ENCODE measurements at regions of chr11 and their contacts with region 1.

Region 1: GRCh38 chr11:11841723-11842420 is at the start of gene USP47:
- DNase-seq: peak; percentile 94
- H3K4me3 Mint-ChIP-seq: no peak within 1 kb of the TSS
- H3K27ac Mint-ChIP-seq: no peak within 1 kb of the TSS
- H3K4me1 Mint-ChIP-seq: peaks cover 2% of the 10 kb centered on the region
- H3K27me3 Mint-ChIP-seq: peaks cover 5% of the 10 kb centered on the region
- total RNA-seq, gene USP47: 52.4 to 56.0 TPM

Region 2: DNA sequence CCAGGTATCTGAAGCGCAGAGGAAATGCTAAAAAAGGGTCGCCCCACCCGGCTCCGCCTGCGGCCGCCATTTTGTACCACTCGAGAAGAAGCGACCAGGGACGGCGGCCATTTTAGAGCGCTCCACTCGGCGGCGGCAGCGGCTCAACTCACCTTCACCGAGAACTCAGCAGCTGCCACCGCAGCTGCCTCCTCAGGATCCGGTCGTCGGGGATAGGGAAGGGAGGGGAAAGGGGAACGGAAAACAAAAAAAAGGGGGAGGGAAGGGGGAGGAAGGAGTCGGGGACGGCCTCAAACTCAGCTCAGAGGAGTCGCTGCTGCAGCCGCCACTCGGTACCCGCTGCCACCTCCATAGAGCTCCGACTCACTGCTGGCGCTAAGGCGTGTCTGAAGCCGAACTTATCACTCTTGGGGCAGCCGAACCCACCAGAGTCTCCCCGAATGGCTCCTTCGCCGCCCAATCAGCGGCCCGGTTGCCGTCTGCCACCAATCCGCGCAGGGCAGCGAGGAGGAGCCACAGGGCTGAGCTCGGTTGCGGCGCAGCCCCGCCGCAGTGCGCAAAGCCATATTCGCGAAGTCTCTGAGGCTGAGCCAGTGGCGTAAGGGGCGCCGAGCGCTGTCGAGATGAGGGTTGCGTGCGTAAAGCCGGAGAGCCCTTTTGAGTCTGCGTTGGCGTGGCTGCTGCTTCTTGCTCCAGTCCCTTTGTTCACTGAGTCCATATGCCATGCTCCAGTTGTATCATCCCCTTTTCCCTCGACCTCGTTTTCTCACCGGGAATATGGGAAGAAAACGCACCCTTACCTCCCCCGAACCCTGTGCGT is 1033.1 kb before region 1 on chr11 and contains the start of gene EIF4G2:
- CTCF ChIA-PET with region 1: no interaction called
- intact Hi-C with region 1: loop called (anchors 1 kb)
- DNase-seq: peak; percentile 98
- H3K4me3 Mint-ChIP-seq: peak within 1 kb of the TSS; percentile 95
- H3K27ac Mint-ChIP-seq: peak within 1 kb of the TSS; percentile 97
- H3K4me1 Mint-ChIP-seq: peaks cover 43% of the 10 kb centered on the region
- H3K27me3 Mint-ChIP-seq: no peaks in the 10 kb centered on the region
- total RNA-seq, gene EIF4G2: 640 to 734 TPM

Region 3: GRCh38 chr11:11621573-11622319 is 220.1 kb before region 1 on chr11 and contains the start of gene GALNT18:
- CTCF ChIA-PET with region 1: no interaction called
- intact Hi-C with region 1: loop called (anchors 5 kb)
- DNase-seq: peak; percentile 88
- H3K4me3 Mint-ChIP-seq: peak within 1 kb of the TSS; percentile 74
- H3K27ac Mint-ChIP-seq: no peak within 1 kb of the TSS
- H3K4me1 Mint-ChIP-seq: no peaks in the 10 kb centered on the region
- H3K27me3 Mint-ChIP-seq: peaks cover 48% of the 10 kb centered on the region
- total RNA-seq, gene GALNT18: 4.3 to 4.7 TPM

Region 4: DNA sequence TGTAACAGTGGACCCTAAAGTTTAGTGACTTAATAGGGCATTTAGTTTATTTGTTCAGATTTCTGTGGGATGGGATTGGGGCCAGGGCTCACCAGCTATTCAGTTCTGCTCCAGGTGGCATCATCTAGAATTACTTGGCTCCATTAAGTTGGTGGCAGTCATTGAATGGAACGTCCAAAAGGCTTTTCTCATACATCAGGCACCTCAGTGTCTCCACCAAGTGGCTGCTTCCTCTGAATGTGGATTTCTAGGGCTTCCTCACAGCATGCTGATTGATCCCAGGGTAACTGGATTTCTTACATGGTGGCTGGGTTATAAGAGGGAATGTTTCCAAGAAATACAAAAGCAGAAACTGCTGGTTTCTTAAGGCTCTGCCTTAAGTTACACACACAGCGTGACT is 34.6 kb after region 1 on chr11:
- CTCF ChIA-PET with region 1: no interaction called
- intact Hi-C with region 1: loop called (anchors 2 kb)
- DNase-seq: peak; percentile 17
- H3K4me3 Mint-ChIP-seq: no peak overlapping the region
- H3K27ac Mint-ChIP-seq: no peak overlapping the region
- H3K4me1 Mint-ChIP-seq: peaks cover 46% of the 10 kb centered on the region
- H3K27me3 Mint-ChIP-seq: no peaks in the 10 kb centered on the region

Region 5: GRCh38 chr11:12224537-12224893 is 382.6 kb after region 1 on chr11:
- CTCF ChIA-PET with region 1: no interaction called
- intact Hi-C with region 1: loop called (anchors 5 kb)
- DNase-seq: peak; percentile 97
- H3K4me3 Mint-ChIP-seq: peak overlapping the region; percentile 64
- H3K27ac Mint-ChIP-seq: peak overlapping the region; percentile 82
- H3K4me1 Mint-ChIP-seq: peaks cover 31% of the 10 kb centered on the region
- H3K27me3 Mint-ChIP-seq: no peaks in the 10 kb centered on the region